HCT116 (cell line): ENCODE measurements at regions of chr2 and their contacts with region 1.

Region 1: GRCh38 chr2:25309402-25309801 is 32.3 kb downstream of the DNMT3A start:
- DNase-seq: peak; percentile 16
- ATAC-seq: peak; percentile 64
- H3K4me3 ChIP-seq: no peak overlapping the region
- H3K27ac ChIP-seq: no peak overlapping the region
- H3K4me1 ChIP-seq: peaks cover 16 to 17% of the 10 kb centered on the region in 2 experiments
- H3K27me3 ChIP-seq: no peaks in the 10 kb centered on the region
- CTCF ChIP-seq: peak; percentile 53 to 65 (median 62); a peak in 5 of 6 replicates
- POLR2A ChIP-seq: no peak
- RAD21 ChIP-seq: peak; percentile 62

Region 2: GRCh38 chr2:25566694-25567093 is 257.3 kb after region 1 on chr2:
- CTCF ChIA-PET with region 1: no interaction called
- POLR2A ChIA-PET with region 1: no interaction called
- RAD21 ChIA-PET with region 1: no interaction called
- intact Hi-C with region 1: loop called (anchors 1 kb)
- DNase-seq: no peak
- ATAC-seq: no peak
- H3K4me3 ChIP-seq: no peak overlapping the region
- H3K27ac ChIP-seq: no peak overlapping the region
- H3K4me1 ChIP-seq: no peaks in the 10 kb centered on the region
- H3K27me3 ChIP-seq: no peaks in the 10 kb centered on the region
- CTCF ChIP-seq: no peak
- POLR2A ChIP-seq: no peak
- RAD21 ChIP-seq: no peak

Region 3: GRCh38 chr2:25664183-25664964 is 355.0 kb after region 1 on chr2:
- CTCF ChIA-PET with region 1: interaction called, 3 read pairs
- POLR2A ChIA-PET with region 1: no interaction called
- RAD21 ChIA-PET with region 1: no interaction called
- intact Hi-C with region 1: loop called (anchors 10 kb)
- DNase-seq: peak; percentile 68
- ATAC-seq: peak; percentile 97
- H3K4me3 ChIP-seq: peak overlapping the region; percentile 0 to 33; a peak in 3 of 4 replicates
- H3K27ac ChIP-seq: peak overlapping the region; percentile 3; the same call in 1 of the 2 replicates
- H3K4me1 ChIP-seq: peaks cover 10 to 16% of the 10 kb centered on the region in 2 experiments
- H3K27me3 ChIP-seq: no peaks in the 10 kb centered on the region
- CTCF ChIP-seq: peak; percentile 81 to 90 (median 85)
- POLR2A ChIP-seq: no peak
- RAD21 ChIP-seq: peak; percentile 89